SK-N-SH (cell line): ENCODE measurements at regions of chr18 and their contacts with region 1.

Region 1: GRCh38 chr18:48022531-48023329 is 92.3 kb upstream of the SMAD2 start:
- DNase-seq: peak; percentile 58
- H3K4me3 ChIP-seq: no peak overlapping the region
- H3K27ac ChIP-seq: peak overlapping the region; percentile 45 to 97
- H3K4me1 ChIP-seq: peaks cover 5 to 33% of the 10 kb centered on the region in 2 experiments; a peak in 3 of 4 replicates
- H3K27me3 ChIP-seq: peaks cover 22% of the 10 kb centered on the region
- CTCF ChIP-seq: peak; percentile 60
- EP300 ChIP-seq: no peak
- RAD21 ChIP-seq: peak; percentile 77

Region 2: DNA sequence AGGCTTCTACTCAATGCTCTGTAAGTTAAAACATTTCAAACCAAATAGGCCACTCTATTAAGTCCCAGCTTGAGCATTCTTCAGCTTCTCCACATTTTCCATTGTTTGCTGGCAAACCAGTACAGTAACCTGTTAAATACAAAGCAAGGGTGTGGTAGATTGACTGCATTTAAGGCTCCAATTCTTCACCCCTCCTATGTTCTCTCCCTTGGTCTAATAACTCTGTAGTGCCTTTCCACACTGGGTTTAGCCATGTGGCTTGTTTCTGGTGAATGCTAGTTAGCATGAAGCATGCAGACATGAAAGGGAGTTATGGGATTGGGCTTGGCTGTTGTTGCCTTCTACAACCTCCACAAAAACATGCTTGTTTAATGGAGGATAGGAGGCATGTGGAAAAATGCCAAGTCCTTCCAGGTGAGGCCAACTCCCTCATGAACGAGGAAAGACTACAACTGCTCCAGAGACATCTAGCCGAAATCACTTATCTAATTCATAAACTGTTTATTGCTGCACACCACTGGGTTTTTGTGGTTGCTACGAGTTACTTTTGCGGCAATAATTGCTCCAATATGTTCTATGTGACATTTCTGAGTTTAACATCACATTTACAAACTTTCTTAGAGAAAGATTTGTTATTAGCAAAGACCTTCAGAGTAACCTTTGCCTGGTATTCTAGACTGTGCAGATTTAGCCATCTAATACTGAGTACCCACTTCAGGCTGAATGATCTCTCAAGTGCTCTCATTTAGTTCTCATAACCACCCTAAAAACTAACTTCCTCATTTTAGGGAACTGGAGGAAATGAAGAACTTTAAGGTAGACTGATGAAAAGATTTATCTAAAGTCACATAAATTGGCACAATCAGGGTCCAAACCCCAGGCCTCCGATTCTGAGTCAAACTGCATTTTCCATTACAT is 196.3 kb before region 1 on chr18:
- CTCF ChIA-PET with region 1: no interaction called
- POLR2A ChIA-PET with region 1: no interaction called
- DNase-seq: no peak
- H3K4me3 ChIP-seq: no peak overlapping the region
- H3K27ac ChIP-seq: no peak overlapping the region
- H3K4me1 ChIP-seq: no peaks in the 10 kb centered on the region; a peak in 1 of 4 replicates
- H3K27me3 ChIP-seq: no peaks in the 10 kb centered on the region
- CTCF ChIP-seq: no peak
- EP300 ChIP-seq: no peak
- RAD21 ChIP-seq: no peak

Region 3: GRCh38 chr18:48455555-48456478 is 433.1 kb after region 1 on chr18:
- CTCF ChIA-PET with region 1: interaction called, 10 read pairs
- POLR2A ChIA-PET with region 1: no interaction called
- DNase-seq: no peak
- H3K4me3 ChIP-seq: no peak overlapping the region
- H3K27ac ChIP-seq: no peak overlapping the region
- H3K4me1 ChIP-seq: peaks cover 0 to 24% of the 10 kb centered on the region in 2 experiments; a peak in 1 of 4 replicates
- H3K27me3 ChIP-seq: no peaks in the 10 kb centered on the region; the same call in 1 of the 2 replicates
- CTCF ChIP-seq: no peak
- EP300 ChIP-seq: no peak
- RAD21 ChIP-seq: no peak